Posterior vena cava (tissue), 2 donors: ENCODE measurements at regions of chr18 and their contacts with region 1.

Region 1: GRCh38 chr18:1846640-1847039 is 724.7 kb downstream of the METTL4 start:
- DNase-seq: no peak

Region 2: GRCh38 chr18:1361936-1362335 is 484.7 kb before region 1 on chr18:
- intact Hi-C with region 1: loop called in 1 of 2 experiments (anchors 5 kb)
- DNase-seq: no peak